Endothelial cell of umbilical vein (primary cell): ENCODE measurements at regions of chr20 and their contacts with region 1.

Region 1: DNA sequence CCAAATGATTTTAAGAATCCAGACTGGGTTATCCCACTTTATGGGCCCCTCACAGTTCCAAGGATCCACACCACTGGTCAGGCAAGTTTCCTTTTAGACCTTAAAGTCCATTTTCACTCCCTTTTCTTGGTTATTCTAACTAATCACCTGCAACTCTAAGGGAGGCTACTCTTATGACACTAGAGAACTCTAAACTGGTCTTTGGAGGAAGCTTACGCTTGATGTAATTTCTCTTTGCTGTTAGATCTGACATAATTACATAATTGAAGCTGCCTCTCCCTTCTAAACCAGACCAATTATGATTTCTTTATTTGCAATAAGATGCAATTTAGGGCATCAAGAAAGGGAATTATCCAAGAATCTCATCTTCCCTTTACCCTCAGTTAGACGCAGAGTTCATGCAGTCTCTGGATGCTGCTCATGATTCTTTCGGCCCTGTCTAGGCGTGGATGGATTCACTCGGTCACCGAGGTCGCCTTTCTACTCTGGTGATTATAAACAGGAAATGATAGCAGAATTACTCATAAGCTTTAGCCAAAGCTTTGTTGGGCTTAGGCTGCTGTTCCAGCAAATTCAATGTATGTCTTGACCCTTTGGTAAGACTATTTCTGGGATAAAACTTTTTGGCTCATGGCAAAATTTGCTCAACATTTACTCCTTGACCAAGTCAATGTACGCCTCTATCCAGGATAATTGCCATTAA is 166.4 kb upstream of the PRND start:
- DNase-seq: peak; percentile 88
- H3K4me3 ChIP-seq: peak overlapping the region in 1 of 3 experiments; percentile 1
- H3K27ac ChIP-seq: peak overlapping the region; percentile 75
- H3K4me1 ChIP-seq: peaks cover 35% of the 10 kb centered on the region
- H3K27me3 ChIP-seq: no peaks in the 10 kb centered on the region
- CTCF ChIP-seq: no peak
- POLR2A ChIP-seq: no peak

Region 2: GRCh38 chr20:4507288-4507719 is 48.0 kb before region 1 on chr20:
- CTCF ChIA-PET with region 1: interaction called, 4 read pairs
- POLR2A ChIA-PET with region 1: interaction called, 3 read pairs
- dilution Hi-C with region 1: no loop called
- intact Hi-C with region 1: loop called (anchors 1 kb)
- DNase-seq: peak; percentile 96
- H3K4me3 ChIP-seq: no peak overlapping the region
- H3K27ac ChIP-seq: peak overlapping the region; percentile 96
- H3K4me1 ChIP-seq: peaks cover 37% of the 10 kb centered on the region
- H3K27me3 ChIP-seq: no peaks in the 10 kb centered on the region
- CTCF ChIP-seq: no peak
- POLR2A ChIP-seq: no peak

Region 3: GRCh38 chr20:4512891-4513550 is 42.3 kb before region 1 on chr20:
- CTCF ChIA-PET with region 1: interaction called, 5 read pairs
- POLR2A ChIA-PET with region 1: no interaction called
- dilution Hi-C with region 1: no loop called
- intact Hi-C with region 1: loop called (anchors 1 kb)
- DNase-seq: peak; percentile 90
- H3K4me3 ChIP-seq: no peak overlapping the region
- H3K27ac ChIP-seq: peak overlapping the region; percentile 98
- H3K4me1 ChIP-seq: peaks cover 47% of the 10 kb centered on the region
- H3K27me3 ChIP-seq: no peaks in the 10 kb centered on the region
- CTCF ChIP-seq: no peak
- POLR2A ChIP-seq: no peak